ENCODE measurements at regions of chr14 and their contacts with region 1.

Region 1: DNA sequence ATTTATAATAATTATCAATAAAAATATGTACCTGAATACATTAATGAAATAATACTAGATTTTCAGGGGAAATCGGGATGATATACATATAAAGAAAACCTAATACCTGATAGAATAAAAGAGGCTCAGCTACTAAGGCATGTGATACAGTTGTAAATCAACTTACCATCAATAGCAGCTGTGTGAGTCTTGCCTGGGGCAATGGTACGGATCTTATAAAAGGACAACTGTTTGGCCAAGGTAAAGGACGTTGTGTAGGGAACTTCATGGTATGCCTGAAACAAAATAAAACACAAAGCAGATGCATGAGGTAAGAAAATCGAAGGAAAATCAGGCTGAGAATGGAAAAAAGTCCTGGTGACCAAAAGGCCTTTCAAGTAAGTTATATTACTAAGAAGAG is 25.4 kb downstream of the NEK9 start:
- DNase-seq: no peak
- H3K4me3 ChIP-seq: no peak overlapping the region
- H3K27ac ChIP-seq: no peak overlapping the region
- H3K4me1 ChIP-seq: no peaks in the 10 kb centered on the region
- H3K27me3 ChIP-seq: no peaks in the 10 kb centered on the region

Region 2: GRCh38 chr14:75119056-75119455 is 17.6 kb after region 1 on chr14:
- CTCF ChIA-PET with region 1: interaction called, 10 read pairs
- POLR2A ChIA-PET with region 1: no interaction called
- DNase-seq: no peak
- H3K4me3 ChIP-seq: no peak overlapping the region
- H3K27ac ChIP-seq: no peak overlapping the region
- H3K4me1 ChIP-seq: peaks cover 8 to 25% (median 18%) of the 10 kb centered on the region in 4 experiments
- H3K27me3 ChIP-seq: no peaks in the 10 kb centered on the region

Region 3: GRCh38 chr14:75158843-75159614 is 57.5 kb after region 1 on chr14:
- CTCF ChIA-PET with region 1: no interaction called
- POLR2A ChIA-PET with region 1: no interaction called
- DNase-seq: no peak
- H3K4me3 ChIP-seq: no peak overlapping the region
- H3K27ac ChIP-seq: no peak overlapping the region
- H3K4me1 ChIP-seq: peaks cover 3 to 19% (median 10%) of the 10 kb centered on the region in 4 experiments
- H3K27me3 ChIP-seq: no peaks in the 10 kb centered on the region

Measured in common myeloid progenitor, CD34-positive (primary cell).